ENCODE measurements at regions of chr11 and their contacts with region 1.

Region 1: DNA sequence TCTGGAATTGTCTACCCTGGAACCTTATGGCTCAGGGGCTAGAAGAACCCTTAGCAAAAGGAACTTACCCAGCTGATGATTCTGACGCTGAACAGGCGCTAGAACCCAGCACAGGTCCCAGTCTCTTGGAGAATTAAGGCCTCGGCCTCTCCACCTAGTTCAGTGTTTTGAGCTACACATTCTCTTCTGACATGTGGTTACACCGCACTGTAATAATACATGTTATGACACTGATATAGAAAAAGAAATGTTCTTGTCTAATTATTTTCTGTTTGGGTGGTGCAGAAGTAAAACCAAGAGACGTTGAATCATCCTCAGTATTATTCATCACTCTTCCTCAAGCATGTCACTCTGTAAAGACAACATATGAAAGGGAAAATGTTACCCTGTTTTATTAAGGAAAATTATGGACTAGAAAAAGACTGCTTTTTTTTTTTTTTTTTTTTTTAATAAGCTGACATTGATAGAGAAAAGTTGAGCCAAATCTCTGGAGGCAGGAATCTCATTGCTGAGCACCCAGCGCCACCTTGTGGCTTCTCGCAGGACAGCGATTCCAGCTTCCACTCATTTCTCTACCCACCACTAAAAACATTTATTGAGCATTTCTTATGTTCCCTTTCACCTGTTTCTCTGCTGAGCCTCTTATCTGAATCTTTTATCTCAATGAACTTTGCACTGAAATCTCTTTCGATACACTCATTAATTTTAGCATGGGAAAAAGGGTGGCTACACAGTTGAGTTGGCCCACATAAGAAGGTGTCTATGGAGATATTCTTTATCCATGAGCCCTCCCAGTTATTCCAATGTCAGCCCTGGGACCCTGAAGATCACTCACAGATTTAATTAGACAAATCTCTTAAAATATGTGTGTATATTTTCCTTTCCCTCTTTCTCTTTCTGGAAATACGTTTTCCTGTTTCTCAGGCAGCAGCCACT is 12.6 kb upstream of the APLNR start:
- DNase-seq: peak; percentile 62
- H3K4me3 Mint-ChIP-seq: no peak overlapping the region
- H3K27ac Mint-ChIP-seq: no peak overlapping the region
- H3K4me1 Mint-ChIP-seq: peaks cover 10% of the 10 kb centered on the region
- H3K27me3 Mint-ChIP-seq: no peaks in the 10 kb centered on the region
- CTCF ChIP-seq: peak; percentile 93

Region 2: GRCh38 chr11:56855217-56855616 is 394.4 kb before region 1 on chr11:
- CTCF ChIA-PET with region 1: interaction called, 436 read pairs
- POLR2A ChIA-PET with region 1: interaction called, 3 read pairs
- intact Hi-C with region 1: no loop called
- DNase-seq: no peak
- H3K4me3 Mint-ChIP-seq: no peak overlapping the region
- H3K27ac Mint-ChIP-seq: no peak overlapping the region
- H3K4me1 Mint-ChIP-seq: no peaks in the 10 kb centered on the region
- H3K27me3 Mint-ChIP-seq: no peaks in the 10 kb centered on the region
- CTCF ChIP-seq: no peak

Region 3: GRCh38 chr11:57103899-57104605 is 145.6 kb before region 1 on chr11:
- CTCF ChIA-PET with region 1: interaction called, 14 read pairs
- POLR2A ChIA-PET with region 1: no interaction called
- intact Hi-C with region 1: no loop called
- DNase-seq: no peak
- H3K4me3 Mint-ChIP-seq: no peak overlapping the region
- H3K27ac Mint-ChIP-seq: no peak overlapping the region
- H3K4me1 Mint-ChIP-seq: no peaks in the 10 kb centered on the region
- H3K27me3 Mint-ChIP-seq: no peaks in the 10 kb centered on the region
- CTCF ChIP-seq: no peak

Region 4: DNA sequence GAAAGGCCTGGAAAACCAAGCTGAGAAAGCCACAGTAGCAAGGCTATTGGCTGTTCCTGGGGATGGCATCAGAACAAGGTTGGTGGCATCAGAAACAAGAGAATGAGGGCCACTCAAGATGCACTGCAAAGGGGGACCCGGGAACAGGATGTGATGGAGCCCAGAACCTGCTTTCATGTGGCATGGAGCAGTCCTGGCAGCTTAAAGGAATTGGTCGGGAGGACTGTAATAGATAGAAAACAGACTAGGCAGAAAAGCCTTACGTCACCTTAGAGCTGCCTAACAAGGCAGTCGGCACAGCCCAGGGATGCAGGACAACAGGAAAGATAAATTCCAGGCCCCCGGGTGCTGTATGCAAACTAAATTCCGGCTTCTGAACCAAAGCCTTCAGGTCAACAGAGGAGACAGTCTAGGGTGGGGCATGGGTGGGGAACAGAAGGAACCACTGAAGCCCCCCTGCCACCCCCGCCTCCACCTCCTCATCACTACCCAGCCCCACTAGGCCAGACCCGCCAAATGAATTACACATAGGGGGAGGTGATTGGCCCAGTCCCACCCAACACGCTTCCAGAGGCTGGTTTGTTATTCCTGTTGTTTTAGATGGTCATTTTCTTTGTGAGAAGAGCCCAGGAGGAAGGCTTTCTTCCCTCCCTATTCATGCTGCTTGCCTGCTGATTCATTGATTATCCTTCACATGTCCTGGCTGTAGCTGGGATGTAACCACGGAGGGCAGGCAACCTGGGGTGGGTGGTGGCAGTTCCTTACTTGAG is 93.6 kb before region 1 on chr11:
- CTCF ChIA-PET with region 1: interaction called, 12 read pairs
- POLR2A ChIA-PET with region 1: no interaction called
- intact Hi-C with region 1: no loop called
- DNase-seq: no peak
- H3K4me3 Mint-ChIP-seq: no peak overlapping the region
- H3K27ac Mint-ChIP-seq: no peak overlapping the region
- H3K4me1 Mint-ChIP-seq: no peaks in the 10 kb centered on the region
- H3K27me3 Mint-ChIP-seq: no peaks in the 10 kb centered on the region
- CTCF ChIP-seq: no peak

Region 5: DNA sequence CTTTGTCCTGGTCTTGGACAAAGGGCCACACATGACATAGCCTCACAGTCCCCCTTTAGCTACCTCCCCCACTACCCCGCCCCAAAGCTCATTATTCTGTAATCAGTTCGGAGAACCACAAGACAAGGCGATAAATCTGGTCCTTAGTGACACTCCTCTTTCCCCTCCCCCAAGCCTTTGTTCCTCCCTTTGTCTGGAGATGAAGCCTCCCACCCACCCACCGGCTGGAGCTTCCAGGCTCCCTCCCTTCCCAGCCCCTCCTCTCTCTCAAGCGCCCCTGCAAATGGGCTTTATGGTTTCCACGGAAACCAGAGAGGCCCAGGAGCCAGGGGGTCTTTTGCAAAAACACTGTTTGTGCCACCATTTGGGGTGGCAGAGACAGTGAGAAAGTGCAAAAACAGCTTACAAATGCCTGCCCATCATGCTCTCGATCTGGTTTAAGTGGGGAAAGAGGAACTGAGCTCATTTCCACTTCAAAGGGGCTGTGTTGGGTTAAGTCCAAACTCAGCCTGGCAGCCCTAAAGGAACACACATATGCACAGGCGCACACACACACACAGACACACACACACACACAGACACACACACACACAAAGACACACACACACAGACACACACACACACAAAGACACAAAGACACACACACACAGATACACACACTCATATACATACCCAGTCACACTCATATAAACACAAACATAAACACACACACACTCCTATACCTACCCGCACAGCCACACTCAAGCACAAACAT is 36.1 kb before region 1 on chr11:
- CTCF ChIA-PET with region 1: interaction called, 13 read pairs
- POLR2A ChIA-PET with region 1: no interaction called
- intact Hi-C with region 1: no loop called
- DNase-seq: no peak
- H3K4me3 Mint-ChIP-seq: no peak overlapping the region
- H3K27ac Mint-ChIP-seq: no peak overlapping the region
- H3K4me1 Mint-ChIP-seq: no peaks in the 10 kb centered on the region
- H3K27me3 Mint-ChIP-seq: no peaks in the 10 kb centered on the region
- CTCF ChIP-seq: no peak

Region 6: DNA sequence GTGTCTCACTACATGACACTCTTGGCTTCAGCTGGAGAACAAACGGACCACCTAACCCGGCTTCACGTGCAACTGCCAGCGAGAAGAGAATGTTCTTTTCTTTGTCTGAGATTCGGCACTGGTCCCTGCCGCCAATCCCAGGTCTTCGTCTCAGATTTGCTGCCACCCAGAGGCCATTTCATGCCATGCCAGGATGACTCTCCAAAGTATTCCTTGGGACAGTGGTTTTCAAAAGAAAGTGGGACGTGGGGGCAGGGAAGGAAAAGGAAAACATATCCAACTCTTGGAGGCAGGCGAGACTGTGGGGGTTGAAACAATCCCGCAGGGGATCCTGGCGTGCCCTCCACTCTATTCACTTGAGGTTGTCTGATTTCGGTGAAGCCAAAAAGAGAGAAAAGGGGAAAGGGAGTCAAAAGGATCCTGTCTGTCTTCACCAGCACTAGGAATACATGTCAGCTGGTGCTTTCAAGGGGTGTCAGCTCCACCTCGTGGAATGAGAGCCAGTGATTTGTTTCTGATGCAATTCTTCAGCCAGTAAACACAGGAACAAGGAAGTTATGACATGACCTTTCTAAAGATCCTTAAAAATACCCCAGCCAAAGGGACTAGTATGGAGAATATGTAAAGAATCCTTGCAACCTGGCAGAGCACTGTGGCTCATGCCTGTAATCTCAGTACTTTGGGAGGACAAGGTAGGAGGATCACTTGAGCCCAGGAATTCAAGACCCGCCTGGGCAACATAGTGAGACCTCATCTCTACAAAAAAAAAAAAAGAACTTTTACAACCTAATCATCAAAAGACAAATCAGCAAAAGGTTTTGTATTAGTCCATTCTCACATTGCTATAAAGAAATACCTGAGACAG is 28.4 kb after region 1 on chr11:
- CTCF ChIA-PET with region 1: interaction called, 35 read pairs
- POLR2A ChIA-PET with region 1: interaction called, 14 read pairs
- intact Hi-C with region 1: loop called (anchors 1 kb)
- DNase-seq: peak; percentile 86
- H3K4me3 Mint-ChIP-seq: peak overlapping the region; percentile 49
- H3K27ac Mint-ChIP-seq: peak overlapping the region; percentile 83
- H3K4me1 Mint-ChIP-seq: peaks cover 44% of the 10 kb centered on the region
- H3K27me3 Mint-ChIP-seq: no peaks in the 10 kb centered on the region
- CTCF ChIP-seq: peak; percentile 62

Region 7: GRCh38 chr11:57778318-57779037 is 528.8 kb after region 1 on chr11:
- CTCF ChIA-PET with region 1: no interaction called
- POLR2A ChIA-PET with region 1: no interaction called
- intact Hi-C with region 1: no loop called
- DNase-seq: peak; percentile 96
- H3K4me3 Mint-ChIP-seq: peak overlapping the region; percentile 49
- H3K27ac Mint-ChIP-seq: peak overlapping the region; percentile 85
- H3K4me1 Mint-ChIP-seq: peaks cover 58% of the 10 kb centered on the region
- H3K27me3 Mint-ChIP-seq: no peaks in the 10 kb centered on the region
- CTCF ChIP-seq: no peak

Measured in MCF 10A (cell line).